ENCODE measurements at regions of chr20 and their contacts with region 1.

Region 1: DNA sequence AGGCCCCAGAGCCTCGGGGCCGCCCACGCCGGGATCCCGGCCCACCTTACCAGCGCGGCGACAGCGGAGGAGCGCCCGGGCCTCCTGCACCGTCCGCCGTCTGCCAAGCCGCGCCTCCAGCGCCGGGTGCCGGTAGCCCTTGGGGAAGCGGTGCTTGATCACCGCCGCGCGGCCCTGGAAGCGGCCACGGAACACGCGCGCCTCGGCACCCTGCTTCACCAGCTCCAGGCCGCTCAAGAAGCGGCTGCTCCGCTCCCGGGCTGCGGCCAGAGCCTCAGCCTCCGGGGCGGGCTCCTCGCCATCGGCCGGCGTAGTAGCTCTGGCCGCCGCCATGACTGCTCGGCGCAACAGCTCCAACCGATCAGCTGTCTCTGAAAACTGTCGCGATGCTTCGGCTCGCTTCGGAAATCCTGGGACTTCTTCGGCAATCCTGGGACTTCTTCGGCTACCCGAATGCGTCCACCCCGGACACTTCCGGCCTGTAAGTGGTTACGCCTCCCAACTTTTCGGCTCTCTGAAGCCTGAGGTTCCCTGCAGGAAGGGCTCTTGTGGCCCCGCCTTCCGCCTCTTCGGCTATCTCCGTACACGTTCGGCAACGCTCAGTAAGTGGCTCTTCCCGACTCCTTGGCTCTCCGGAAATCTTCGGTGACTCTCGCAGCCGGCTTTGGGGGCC is at the start of gene TP53RK:
- DNase-seq: peak; percentile 98 to 99
- ATAC-seq: peak; percentile 97 to 99 (median 98)
- H3K4me3 ChIP-seq: peak within 1 kb of the TSS; percentile 65 to 95 (median 83)
- H3K27ac ChIP-seq: peak within 1 kb of the TSS; percentile 81 to 99 (median 94)
- H3K4me1 ChIP-seq: peaks cover 3 to 47% (median 28%) of the 10 kb centered on the region in 9 donors
- H3K27me3 ChIP-seq: no peaks in the 10 kb centered on the region
- CTCF ChIP-seq: peak in 7 of 9 donors; percentile 14 to 53 (median 41)
- total RNA-seq, gene TP53RK: 3.5 to 7.3 (median 6.4) TPM

Region 2: DNA sequence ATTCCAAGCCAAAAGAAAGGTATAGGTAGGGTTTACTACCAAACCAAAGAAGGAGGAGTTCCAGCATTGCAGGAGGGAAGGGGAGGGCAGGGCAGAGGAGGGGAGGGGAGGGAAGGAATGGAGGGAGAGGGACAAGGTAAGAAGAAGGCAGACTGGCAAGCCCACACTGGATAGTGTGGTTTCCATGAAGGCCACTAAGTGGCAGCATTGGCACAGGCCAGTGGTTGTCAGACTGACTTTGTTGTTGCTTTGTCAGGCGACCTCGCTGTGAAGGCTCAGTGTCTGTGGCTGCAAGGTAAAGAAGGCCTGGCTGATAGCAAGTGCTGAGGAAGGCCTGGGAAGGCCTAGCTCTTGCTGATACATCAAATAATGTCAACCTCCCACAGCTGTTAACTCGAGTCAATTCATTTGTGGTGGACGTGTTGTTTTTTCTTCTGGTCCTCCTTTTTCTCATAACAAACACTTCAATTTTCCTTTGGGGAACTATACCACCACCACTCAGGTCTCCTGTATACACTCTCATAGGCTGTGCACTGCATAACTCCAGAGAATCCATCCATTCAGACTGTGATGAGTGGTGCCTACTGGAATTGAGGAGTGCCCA is 168.1 kb before region 1 on chr20:
- intact Hi-C with region 1: loop called in 3 of 10 experiments (anchors 5 to 10 kb)
- DNase-seq: peak in 1 of 2 donors; percentile 4
- ATAC-seq: peak in 3 of 8 donors; percentile 55 to 68 (median 58)
- H3K4me3 ChIP-seq: no peak overlapping the region
- H3K27ac ChIP-seq: no peak overlapping the region
- H3K4me1 ChIP-seq: no peaks in the 10 kb centered on the region
- H3K27me3 ChIP-seq: peaks cover 0 to 32% (median 26%) of the 10 kb centered on the region in 7 donors
- CTCF ChIP-seq: peak in 8 of 9 donors; percentile 28 to 67 (median 58)

Measured in heart right ventricle (tissue), 16 donors.